Heart right ventricle (tissue), 16 donors: ENCODE measurements at regions of chr12 and their contacts with region 1.

Region 1: DNA sequence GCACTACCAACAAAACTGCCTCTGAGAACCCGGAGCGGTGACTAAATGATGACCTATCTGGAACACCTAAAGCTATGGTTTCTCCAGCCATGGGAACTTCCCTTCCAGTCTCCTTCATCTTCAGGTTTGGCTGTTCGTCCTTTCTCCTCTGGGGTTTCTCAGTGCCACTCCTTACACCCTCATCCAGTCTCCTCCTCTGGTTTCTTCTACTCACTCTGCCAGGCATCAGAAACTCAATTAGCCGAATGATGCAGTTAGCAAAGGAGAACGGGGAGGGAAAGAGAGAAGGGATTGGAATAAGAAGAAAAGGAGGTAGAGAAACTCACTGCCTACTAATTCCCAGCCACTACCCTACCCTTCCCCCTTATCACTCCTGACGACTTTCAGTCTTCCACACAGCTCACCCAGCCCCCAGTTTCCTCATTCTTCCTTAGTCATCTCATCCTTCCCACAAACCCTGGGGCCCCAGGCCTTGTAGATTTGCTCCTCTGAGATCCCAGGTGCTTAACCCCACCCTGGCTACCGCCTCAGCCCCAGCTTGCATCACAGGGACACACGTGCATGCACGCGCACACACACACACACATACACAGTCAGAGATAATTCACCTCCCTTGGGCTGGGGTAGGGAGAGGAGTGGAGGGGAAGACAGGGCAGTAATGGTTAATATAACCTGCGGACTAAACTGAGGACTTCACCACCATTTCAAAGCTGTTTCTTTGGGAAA is 13.0 kb downstream of the FGD6 start:
- DNase-seq: peak in 1 of 2 donors; percentile 27
- ATAC-seq: peak in 6 of 8 donors; percentile 34 to 82 (median 64)
- H3K4me3 ChIP-seq: no peak overlapping the region
- H3K27ac ChIP-seq: peak overlapping the region in 7 of 10 donors; percentile 30 to 88 (median 72)
- H3K4me1 ChIP-seq: peaks cover 5 to 73% (median 58%) of the 10 kb centered on the region in 9 donors
- H3K27me3 ChIP-seq: no peaks in the 10 kb centered on the region
- CTCF ChIP-seq: no peak

Region 2: DNA sequence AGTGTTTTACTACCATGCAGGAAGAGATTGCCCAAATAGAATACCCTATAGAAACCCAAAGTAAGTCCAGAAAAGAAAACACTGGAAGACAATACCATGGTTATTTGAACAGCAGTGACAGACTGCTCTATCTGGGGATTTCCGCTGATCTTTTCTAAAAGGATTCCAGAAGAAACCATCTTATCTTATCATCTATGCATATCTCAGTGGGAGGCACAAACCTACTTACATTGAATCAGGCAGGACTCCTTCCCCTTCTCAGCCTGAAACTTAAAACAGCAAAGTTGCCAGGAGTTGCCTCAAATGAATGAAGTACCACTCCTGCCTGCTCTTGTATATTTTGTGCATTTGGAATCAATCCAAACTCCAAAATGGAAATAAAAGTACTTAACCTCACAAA is 74.2 kb before region 1 on chr12:
- intact Hi-C with region 1: loop called in 1 of 10 experiments (anchors 10 kb)
- DNase-seq: no peak
- ATAC-seq: no peak
- H3K4me3 ChIP-seq: no peak overlapping the region
- H3K27ac ChIP-seq: no peak overlapping the region
- H3K4me1 ChIP-seq: peaks cover 0 to 17% (median 4%) of the 10 kb centered on the region in 9 donors
- H3K27me3 ChIP-seq: no peaks in the 10 kb centered on the region
- CTCF ChIP-seq: no peak

Region 3: DNA sequence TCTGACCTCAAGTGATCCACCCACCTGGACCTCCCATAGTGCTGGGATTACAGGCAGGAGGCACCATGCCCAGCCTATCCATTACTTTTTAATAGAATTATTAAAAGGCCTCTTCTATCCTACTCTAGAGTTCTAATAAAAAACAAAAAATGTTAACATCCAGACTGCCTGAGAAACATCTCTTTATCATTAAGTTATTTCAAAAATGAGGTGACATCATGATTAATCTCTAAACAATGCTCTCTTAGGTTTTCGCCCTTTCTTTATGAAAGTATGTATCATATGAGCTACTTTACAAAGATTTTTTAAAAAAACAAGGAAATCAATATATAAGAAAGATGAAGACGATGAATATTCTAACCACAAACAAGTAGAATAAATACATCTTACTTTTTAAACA is 39.6 kb before region 1 on chr12:
- intact Hi-C with region 1: no loop called
- DNase-seq: no peak
- ATAC-seq: no peak
- H3K4me3 ChIP-seq: no peak overlapping the region
- H3K27ac ChIP-seq: peak overlapping the region in 1 of 10 donors; percentile 11
- H3K4me1 ChIP-seq: peaks cover 0 to 34% (median 9%) of the 10 kb centered on the region in 9 donors
- H3K27me3 ChIP-seq: no peaks in the 10 kb centered on the region
- CTCF ChIP-seq: no peak

Region 4: GRCh38 chr12:95428472-95428871 is 224.2 kb after region 1 on chr12:
- intact Hi-C with region 1: no loop called
- DNase-seq: peak in 1 of 2 donors; percentile 48
- ATAC-seq: peak; percentile 73 to 97 (median 92)
- H3K4me3 ChIP-seq: no peak overlapping the region
- H3K27ac ChIP-seq: peak overlapping the region in 7 of 10 donors; percentile 8 to 59 (median 46)
- H3K4me1 ChIP-seq: peaks cover 0 to 21% (median 11%) of the 10 kb centered on the region in 9 donors
- H3K27me3 ChIP-seq: no peaks in the 10 kb centered on the region
- CTCF ChIP-seq: no peak